Activated CD4-positive, alpha-beta T cell treated with anti-CD3 and anti-CD28 coated beads for 36 hours (primary cell): ENCODE measurements at regions of chr18 and their contacts with region 1.

Region 1: DNA sequence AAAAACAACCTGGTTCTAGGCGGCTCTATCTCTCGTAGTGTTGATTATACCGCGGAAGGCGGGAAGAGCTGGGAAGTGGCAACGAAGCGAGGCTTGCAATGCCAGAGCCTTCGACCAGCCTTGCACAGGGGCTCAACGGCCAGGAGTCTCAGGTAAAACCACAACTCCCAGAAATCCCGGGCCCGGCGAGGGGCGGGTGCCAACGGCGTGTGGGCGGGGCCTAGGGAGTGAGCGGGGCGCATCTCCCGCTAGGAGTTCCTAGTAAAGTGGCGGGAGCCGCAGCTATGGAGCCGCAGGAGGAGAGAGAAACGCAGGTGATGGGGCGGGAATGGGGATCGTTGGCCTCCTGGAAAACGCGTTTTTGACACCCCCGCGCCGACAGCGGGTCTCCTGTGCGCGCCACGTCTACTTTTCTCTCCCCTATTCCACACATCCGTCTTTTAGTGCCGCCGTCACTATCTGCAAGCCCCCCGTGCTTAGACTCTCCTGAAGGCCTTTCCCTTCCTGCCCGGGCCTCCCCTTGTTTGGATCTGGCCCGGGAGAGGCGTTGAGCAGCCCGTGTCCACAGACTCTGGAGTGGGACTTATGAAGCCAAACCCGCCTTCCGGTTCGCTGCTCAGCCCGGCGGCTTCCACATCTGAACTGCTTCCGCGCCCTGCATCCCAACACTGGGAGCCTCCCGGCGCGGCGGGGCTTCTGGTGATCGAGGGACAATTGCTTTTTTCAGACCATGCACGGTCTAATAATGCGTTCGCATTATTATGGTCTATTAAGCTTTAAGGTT is at the start of gene HAUS1:
- DNase-seq: peak; percentile 90
- ATAC-seq: peak; percentile 96
- H3K4me3 Mint-ChIP-seq: peak within 1 kb of the TSS; percentile 95
- H3K27ac Mint-ChIP-seq: peak within 1 kb of the TSS; percentile 95
- H3K4me1 Mint-ChIP-seq: peaks cover 32% of the 10 kb centered on the region
- H3K27me3 Mint-ChIP-seq: no peaks in the 10 kb centered on the region
- total RNA-seq, gene HAUS1: 62.2 to 79.9 TPM

Region 2: GRCh38 chr18:46084431-46084830 is 19.9 kb before region 1 on chr18:
- CTCF ChIA-PET with region 1: no interaction called
- POLR2A ChIA-PET with region 1: no interaction called
- intact Hi-C with region 1: no loop called
- DNase-seq: no peak
- ATAC-seq: no peak
- H3K4me3 Mint-ChIP-seq: no peak overlapping the region
- H3K27ac Mint-ChIP-seq: no peak overlapping the region
- H3K4me1 Mint-ChIP-seq: no peaks in the 10 kb centered on the region
- H3K27me3 Mint-ChIP-seq: no peaks in the 10 kb centered on the region

Region 3: DNA sequence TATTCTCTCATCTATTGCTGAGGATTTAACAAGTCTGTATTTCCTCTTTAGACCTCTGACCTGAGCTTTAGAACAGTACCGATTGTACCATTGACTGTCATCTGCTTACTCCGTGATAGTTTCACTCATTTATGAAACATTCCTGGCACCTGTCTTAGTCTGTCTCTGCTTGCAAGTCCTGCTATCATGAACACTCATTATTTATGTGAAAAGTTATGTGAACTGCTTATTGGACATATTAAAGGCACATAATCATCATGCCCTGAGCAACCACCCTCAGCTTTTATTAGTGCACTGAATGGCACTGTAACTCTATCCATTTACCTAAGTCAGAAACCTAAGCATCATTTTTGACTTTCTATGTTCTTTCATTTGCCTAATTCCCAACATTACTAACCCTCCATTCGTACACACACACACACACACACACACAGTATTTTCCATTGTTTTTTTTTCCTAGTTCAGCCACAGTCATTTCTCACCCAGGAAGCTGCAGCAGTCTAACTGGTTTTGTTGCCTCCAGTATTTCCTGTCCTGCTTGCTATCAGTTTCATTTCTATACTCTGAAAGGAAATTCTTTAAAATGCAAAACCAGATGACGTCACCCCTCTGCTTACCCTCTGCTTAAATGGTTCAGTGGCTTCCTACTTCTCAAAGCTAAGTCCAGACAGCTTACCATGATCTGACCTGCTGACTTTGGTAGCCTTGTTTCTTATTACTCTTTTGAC is 145.9 kb after region 1 on chr18:
- CTCF ChIA-PET with region 1: no interaction called
- POLR2A ChIA-PET with region 1: no interaction called
- intact Hi-C with region 1: loop called in 1 of 2 experiments (anchors 2 kb)
- DNase-seq: peak; percentile 61
- ATAC-seq: peak; percentile 90
- H3K4me3 Mint-ChIP-seq: peak overlapping the region; percentile 62
- H3K27ac Mint-ChIP-seq: peak overlapping the region; percentile 97
- H3K4me1 Mint-ChIP-seq: peaks cover 64% of the 10 kb centered on the region
- H3K27me3 Mint-ChIP-seq: no peaks in the 10 kb centered on the region

Region 4: GRCh38 chr18:46333431-46334135 is 229.3 kb after region 1 on chr18:
- CTCF ChIA-PET with region 1: no interaction called
- POLR2A ChIA-PET with region 1: no interaction called
- intact Hi-C with region 1: loop called in 1 of 2 experiments (anchors 1 kb)
- DNase-seq: peak; percentile 62
- ATAC-seq: peak; percentile 67
- H3K4me3 Mint-ChIP-seq: peak overlapping the region; percentile 65
- H3K27ac Mint-ChIP-seq: peak overlapping the region; percentile 27
- H3K4me1 Mint-ChIP-seq: peaks cover 12% of the 10 kb centered on the region
- H3K27me3 Mint-ChIP-seq: peaks cover 54% of the 10 kb centered on the region